Cardiac septum (tissue), 1 donor: ENCODE measurements at regions of chr19 and their contacts with region 1.

Region 1: GRCh38 chr19:45250832-45251451 is at the start of gene MARK4:
- DNase-seq: peak; percentile 80
- total RNA-seq, gene MARK4: 36.6 TPM

Region 2: DNA sequence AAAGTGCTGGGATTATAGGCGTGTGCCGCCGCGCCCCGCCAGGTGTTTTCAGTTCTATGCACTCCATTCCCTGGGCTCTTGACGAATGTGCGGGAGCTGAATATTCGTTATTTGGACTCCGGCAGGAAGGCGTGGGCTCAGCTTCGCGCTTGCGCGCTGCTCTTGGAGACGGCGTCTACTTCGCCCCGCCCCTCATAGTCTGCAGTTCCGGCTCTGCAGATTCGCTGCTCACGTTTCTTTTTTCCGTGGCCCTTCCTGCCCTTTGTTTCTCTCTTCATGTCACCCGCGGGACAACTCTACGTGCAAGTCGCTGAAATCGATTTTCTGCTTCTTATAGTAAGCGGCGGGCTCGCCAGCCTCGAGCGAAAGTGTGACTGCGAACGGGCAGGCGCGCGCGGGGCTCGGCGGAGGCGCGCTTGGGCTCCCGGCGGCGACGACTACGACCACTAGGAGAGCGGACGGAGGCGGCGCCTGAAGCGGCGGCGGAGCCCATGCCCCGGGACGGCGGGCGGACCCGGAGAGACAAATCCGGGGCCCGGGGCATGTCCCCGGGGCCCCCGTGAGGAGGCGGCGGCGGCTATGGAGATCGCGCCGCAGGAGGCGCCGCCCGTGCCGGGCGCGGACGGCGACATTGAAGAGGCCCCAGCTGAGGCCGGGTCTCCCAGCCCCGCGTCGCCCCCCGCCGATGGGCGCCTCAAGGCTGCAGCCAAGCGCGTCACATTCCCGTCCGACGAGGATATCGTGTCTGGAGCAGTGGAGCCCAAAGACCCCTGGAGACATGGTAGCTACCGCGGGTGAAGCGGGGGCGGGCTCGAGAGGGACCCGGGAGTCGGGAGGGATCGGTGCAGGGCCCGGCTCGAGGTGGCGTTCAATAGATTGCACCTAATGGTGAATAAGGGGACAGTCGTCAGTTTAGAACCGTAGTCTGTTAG is 157.9 kb before region 1 on chr19 and contains the start of gene PPP1R37:
- intact Hi-C with region 1: loop called (anchors 2 kb)
- DNase-seq: peak; percentile 97
- total RNA-seq, gene PPP1R37: 18.6 TPM

Region 3: GRCh38 chr19:45200568-45200994 is 50.4 kb before region 1 on chr19:
- intact Hi-C with region 1: loop called (anchors 2 kb)
- DNase-seq: no peak

Region 4: DNA sequence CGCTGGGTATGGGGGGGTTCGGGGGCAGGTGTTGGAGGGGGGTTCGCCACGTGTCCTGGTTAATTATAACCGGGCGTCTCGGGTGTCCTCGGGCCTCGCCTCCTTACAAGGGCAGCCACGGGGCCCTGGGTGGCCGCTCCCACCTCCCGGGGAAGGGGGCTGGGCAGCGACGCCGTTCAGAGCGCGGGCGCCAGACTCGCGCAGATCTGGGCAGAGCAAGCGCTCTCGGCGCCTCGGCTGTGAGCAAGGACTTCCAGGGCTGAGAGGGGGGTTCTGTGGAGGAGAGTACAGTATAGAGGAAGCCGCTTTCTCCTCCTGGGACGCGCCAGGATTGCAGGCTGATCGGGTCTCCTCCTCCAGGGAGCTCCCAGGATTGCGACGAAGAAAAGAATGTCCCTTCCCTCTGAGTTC is 72.7 kb after region 1 on chr19:
- intact Hi-C with region 1: loop called (anchors 5 kb)
- DNase-seq: peak; percentile 89

Region 5: DNA sequence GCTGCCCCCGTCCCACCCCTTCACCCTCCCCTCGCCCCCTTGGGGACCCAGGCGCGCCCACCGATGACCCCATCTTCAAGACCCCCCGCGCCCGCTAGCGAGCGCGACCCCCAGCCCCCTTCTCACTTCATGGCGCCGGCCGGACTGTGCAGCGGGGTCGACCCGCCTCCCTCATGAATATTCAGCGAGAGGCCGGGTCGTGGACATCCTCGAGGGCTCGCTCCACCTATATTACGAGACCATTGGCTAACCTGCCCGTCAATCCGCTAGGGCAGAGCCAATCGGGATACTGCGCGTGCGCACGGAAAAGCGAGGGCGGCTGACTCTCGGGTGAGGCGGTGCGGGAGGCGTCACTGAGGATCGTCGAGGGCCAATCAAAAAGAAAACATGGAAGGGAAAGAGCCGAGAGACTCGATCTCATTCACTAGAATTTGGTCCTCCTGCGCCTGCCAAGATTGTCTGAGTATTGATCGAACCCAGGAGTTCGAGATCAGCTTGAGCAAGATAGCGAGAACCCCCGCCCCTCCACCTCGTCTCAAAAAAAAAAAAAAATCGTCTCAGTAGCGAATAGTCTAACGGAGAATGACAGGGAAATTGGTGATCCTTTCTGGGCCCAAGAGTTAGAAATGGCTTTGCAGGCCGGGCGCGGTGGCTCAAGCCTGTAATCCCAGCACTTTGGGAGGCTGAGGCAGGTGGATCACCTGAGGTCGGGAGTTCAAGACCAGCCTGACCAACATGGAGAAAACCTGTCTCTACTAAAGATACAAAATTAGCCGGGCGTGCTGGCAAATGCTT is 119.7 kb after region 1 on chr19 and contains the start of gene ERCC2:
- intact Hi-C with region 1: no loop called
- DNase-seq: peak; percentile 99
- total RNA-seq, gene ERCC2: 12.4 TPM